IMR-90 (cell line): ENCODE measurements at regions of chr1 and their contacts with region 1.

Region 1: DNA sequence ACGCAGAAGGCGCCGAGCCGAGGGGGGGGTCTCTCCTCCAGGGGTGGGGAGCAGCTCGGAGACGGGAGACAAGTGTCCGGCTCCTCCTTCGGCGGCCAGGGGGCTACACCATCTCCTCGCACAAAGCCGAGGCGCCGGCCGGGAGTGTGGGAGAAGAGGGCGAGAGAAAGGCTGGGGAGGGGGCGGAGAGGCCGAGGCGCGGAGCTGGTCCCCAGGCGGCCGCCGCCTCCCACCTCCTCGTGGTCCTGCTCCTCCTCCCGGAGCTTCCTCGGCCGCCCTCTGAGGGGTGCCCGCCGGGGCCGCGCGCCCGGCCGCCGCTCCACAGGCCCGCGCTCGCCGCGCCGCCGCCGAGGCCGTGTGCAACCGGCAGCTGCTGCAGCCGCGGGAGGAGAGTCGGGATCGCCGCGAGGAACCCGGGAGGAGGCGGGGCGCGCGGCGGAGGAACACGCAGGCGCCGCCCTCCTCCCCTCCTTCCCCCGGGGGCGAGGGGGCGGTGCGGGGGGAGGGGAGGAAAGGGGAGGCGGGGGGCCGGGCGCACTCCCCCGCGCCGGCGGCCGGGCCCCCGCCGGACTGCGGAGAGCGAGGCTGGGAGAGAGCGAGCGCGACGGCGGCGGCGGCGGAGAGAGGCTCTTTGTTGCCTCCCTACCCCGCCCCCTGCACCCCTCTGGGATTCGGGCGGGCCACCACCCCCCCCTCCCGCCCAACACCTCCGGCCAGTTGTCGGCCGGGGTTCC is at the start of gene ENAH:
- DNase-seq: peak; percentile 76
- ATAC-seq: peak; percentile 75
- H3K4me3 ChIP-seq: peak within 1 kb of the TSS; percentile 94
- H3K27ac ChIP-seq: peak within 1 kb of the TSS; percentile 98
- H3K4me1 ChIP-seq: peaks cover 14% of the 10 kb centered on the region
- H3K27me3 ChIP-seq: no peaks in the 10 kb centered on the region
- CTCF ChIP-seq: no peak
- POLR2A ChIP-seq: no peak; the same call in none of the 2 replicates
- RAD21 ChIP-seq: peak; percentile 11
- total RNA-seq, gene ENAH: 82.5 and 86.9 TPM in 2 replicates

Region 2: GRCh38 chr1:225554216-225554812 is 98.6 kb before region 1 on chr1:
- CTCF ChIA-PET with region 1: no interaction called
- POLR2A ChIA-PET with region 1: no interaction called
- dilution Hi-C with region 1: no loop called
- in situ Hi-C with region 1: no loop called
- intact Hi-C with region 1: loop called (anchors 5 kb)
- DNase-seq: peak; percentile 44
- ATAC-seq: peak; percentile 69
- H3K4me3 ChIP-seq: no peak overlapping the region
- H3K27ac ChIP-seq: no peak overlapping the region
- H3K4me1 ChIP-seq: peaks cover 4% of the 10 kb centered on the region; the same call in 1 of the 2 replicates
- H3K27me3 ChIP-seq: no peaks in the 10 kb centered on the region
- CTCF ChIP-seq: peak; percentile 51
- POLR2A ChIP-seq: no peak
- RAD21 ChIP-seq: peak; percentile 55

Region 3: DNA sequence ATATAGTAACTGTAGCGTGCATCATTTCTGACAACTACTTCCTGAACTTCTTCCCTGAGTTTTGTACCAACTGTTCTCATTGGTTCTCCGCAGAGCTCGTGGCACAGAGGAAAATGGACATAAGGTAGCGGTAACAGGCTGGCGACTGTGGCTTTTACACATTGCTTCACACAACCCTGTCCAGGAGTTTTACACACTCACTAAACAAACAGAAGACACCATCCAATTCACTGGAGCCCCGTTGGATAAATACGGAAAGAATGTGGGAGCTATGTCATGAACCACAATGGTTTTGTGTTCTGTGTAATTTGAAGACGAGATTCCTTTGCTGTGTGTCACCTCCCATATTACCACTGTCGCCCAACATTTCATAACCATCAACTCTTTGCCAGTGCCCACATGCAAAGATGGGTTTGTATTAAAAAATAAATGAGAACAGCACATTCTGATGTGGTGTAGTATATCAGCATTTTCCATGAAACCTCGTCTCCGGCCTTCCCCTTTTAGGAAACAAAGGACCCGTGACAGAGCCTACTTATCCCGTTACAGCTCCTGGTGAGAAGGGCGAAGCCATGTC is 47.4 kb after region 1 on chr1:
- CTCF ChIA-PET with region 1: no interaction called
- POLR2A ChIA-PET with region 1: no interaction called
- dilution Hi-C with region 1: no loop called
- in situ Hi-C with region 1: no loop called
- intact Hi-C with region 1: loop called (anchors 1 kb)
- DNase-seq: peak; percentile 98
- ATAC-seq: peak; percentile 85
- H3K4me3 ChIP-seq: no peak overlapping the region
- H3K27ac ChIP-seq: peak overlapping the region; percentile 95
- H3K4me1 ChIP-seq: peaks cover 20% of the 10 kb centered on the region
- H3K27me3 ChIP-seq: no peaks in the 10 kb centered on the region
- CTCF ChIP-seq: no peak
- POLR2A ChIP-seq: no peak
- RAD21 ChIP-seq: no peak; the same call in 1 of the 2 replicates

Region 4: GRCh38 chr1:225766967-225767633 is 114.2 kb after region 1 on chr1:
- CTCF ChIA-PET with region 1: interaction called, 9 read pairs
- POLR2A ChIA-PET with region 1: interaction called, 4 read pairs
- dilution Hi-C with region 1: no loop called
- in situ Hi-C with region 1: loop called (anchors 5 kb)
- intact Hi-C with region 1: loop called (anchors 1 kb)
- DNase-seq: peak; percentile 90
- ATAC-seq: peak; percentile 59
- H3K4me3 ChIP-seq: no peak overlapping the region
- H3K27ac ChIP-seq: peak overlapping the region; percentile 85
- H3K4me1 ChIP-seq: peaks cover 36% of the 10 kb centered on the region
- H3K27me3 ChIP-seq: no peaks in the 10 kb centered on the region
- CTCF ChIP-seq: no peak
- POLR2A ChIP-seq: no peak
- RAD21 ChIP-seq: peak; percentile 9; the same call in 1 of the 2 replicates

Region 5: GRCh38 chr1:225923692-225924555 is 271.0 kb after region 1 on chr1 and contains the start of gene PYCR2:
- CTCF ChIA-PET with region 1: no interaction called
- POLR2A ChIA-PET with region 1: no interaction called
- dilution Hi-C with region 1: no loop called
- in situ Hi-C with region 1: no loop called
- intact Hi-C with region 1: loop called (anchors 5 kb)
- DNase-seq: peak; percentile 96
- ATAC-seq: peak; percentile 98
- H3K4me3 ChIP-seq: peak within 1 kb of the TSS; percentile 63
- H3K27ac ChIP-seq: peak within 1 kb of the TSS; percentile 87
- H3K4me1 ChIP-seq: peaks cover 5% of the 10 kb centered on the region; the same call in 1 of the 2 replicates
- H3K27me3 ChIP-seq: no peaks in the 10 kb centered on the region
- CTCF ChIP-seq: no peak
- POLR2A ChIP-seq: peak; percentile 83; the same call in 1 of the 2 replicates
- RAD21 ChIP-seq: no peak
- total RNA-seq, gene PYCR2: 31.4 and 34.4 TPM in 2 replicates